Activated CD4-positive, alpha-beta T cell treated with anti-CD3 and anti-CD28 coated beads, Interleukin-2, amount 10 ng/mL, durations not matched to agents 7 days and 5 days (primary cell): ENCODE measurements at regions of chr16 and their contacts with region 1.

Region 1: GRCh38 chr16:67883872-67884261 is 818 bp upstream of the NRN1L start:
- DNase-seq: peak; percentile 69
- H3K4me3 Mint-ChIP-seq: no peak overlapping the region
- H3K27ac Mint-ChIP-seq: no peak overlapping the region
- H3K4me1 Mint-ChIP-seq: no peaks in the 10 kb centered on the region
- H3K27me3 Mint-ChIP-seq: no peaks in the 10 kb centered on the region

Region 2: DNA sequence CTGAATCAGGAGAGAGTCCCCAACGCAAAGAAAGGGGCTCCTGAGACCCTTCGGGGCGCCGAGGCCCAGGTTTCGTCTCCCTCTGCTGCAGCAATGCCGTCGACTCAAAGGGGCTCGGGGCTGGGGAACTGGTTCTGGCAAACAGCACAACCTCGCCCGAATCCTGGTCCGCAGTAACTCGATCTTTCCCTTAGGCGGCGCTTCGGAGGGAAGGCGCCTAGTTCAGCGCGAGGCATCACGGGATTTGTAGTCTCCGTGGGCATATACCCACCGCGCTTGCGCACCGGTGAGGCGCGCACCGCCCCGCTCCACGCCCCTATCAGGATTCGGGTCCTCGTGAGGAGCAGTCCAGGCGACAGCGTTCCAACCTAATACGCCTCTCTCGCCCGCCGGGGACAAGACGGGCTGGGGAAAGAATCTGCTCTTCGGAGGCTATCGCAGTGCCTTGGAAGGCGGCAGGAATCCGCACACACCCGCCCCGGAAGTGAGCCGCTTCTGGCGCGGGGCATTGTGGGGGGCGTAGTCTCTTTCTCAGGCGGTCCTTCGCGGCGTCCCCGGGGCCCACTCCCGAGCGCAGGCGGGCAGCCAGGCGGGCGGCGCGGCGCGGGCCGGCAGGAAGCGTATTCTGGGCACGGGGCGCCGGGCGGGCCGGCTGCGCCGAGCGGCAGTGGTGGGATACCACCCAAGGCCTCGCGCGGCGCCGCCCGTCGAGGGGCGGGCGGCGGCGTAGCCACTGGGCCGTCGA is 41.9 kb before region 1 on chr16 and contains the start of gene THAP11:
- CTCF ChIA-PET with region 1: interaction called, 16 read pairs
- POLR2A ChIA-PET with region 1: interaction called, 3 read pairs
- DNase-seq: peak; percentile 97
- H3K4me3 Mint-ChIP-seq: peak within 1 kb of the TSS; percentile 91
- H3K27ac Mint-ChIP-seq: peak within 1 kb of the TSS; percentile 98
- H3K4me1 Mint-ChIP-seq: peaks cover 40% of the 10 kb centered on the region
- H3K27me3 Mint-ChIP-seq: no peaks in the 10 kb centered on the region
- total RNA-seq, gene THAP11: 37.5 to 41.7 TPM

Region 3: GRCh38 chr16:67865316-67865715 is 18.6 kb before region 1 on chr16:
- CTCF ChIA-PET with region 1: interaction called, 10 read pairs
- POLR2A ChIA-PET with region 1: no interaction called
- DNase-seq: peak; percentile 36
- H3K4me3 Mint-ChIP-seq: no peak overlapping the region
- H3K27ac Mint-ChIP-seq: no peak overlapping the region
- H3K4me1 Mint-ChIP-seq: peaks cover 5% of the 10 kb centered on the region
- H3K27me3 Mint-ChIP-seq: no peaks in the 10 kb centered on the region

Region 4: GRCh38 chr16:67873538-67874370 is 10.1 kb before region 1 on chr16:
- CTCF ChIA-PET with region 1: interaction called, 10 read pairs
- POLR2A ChIA-PET with region 1: no interaction called
- DNase-seq: no peak
- H3K4me3 Mint-ChIP-seq: peak overlapping the region; percentile 93
- H3K27ac Mint-ChIP-seq: peak overlapping the region; percentile 94
- H3K4me1 Mint-ChIP-seq: peaks cover 29% of the 10 kb centered on the region
- H3K27me3 Mint-ChIP-seq: no peaks in the 10 kb centered on the region

Region 5: DNA sequence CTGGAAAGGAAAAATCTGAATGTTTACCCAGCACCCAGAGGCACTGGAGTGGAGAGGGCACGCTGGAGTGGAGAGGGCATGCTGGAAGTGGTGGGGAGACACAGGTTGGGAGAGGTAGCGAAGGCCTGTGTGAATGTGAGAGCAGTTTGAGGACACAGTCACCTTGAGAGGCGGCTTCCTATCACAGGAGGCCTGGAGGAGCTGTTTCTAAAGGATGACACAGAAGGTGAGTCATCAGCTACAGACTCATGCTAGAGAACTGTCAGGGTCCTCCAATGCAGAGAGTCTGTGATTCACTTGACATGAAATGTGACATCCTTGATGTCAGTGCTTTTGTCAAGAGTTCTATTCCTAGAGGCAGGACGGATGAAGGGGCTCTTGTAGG is 34.0 kb after region 1 on chr16:
- CTCF ChIA-PET with region 1: interaction called, 16 read pairs
- POLR2A ChIA-PET with region 1: no interaction called
- DNase-seq: no peak
- H3K4me3 Mint-ChIP-seq: no peak overlapping the region
- H3K27ac Mint-ChIP-seq: peak overlapping the region; percentile 1
- H3K4me1 Mint-ChIP-seq: peaks cover 24% of the 10 kb centered on the region
- H3K27me3 Mint-ChIP-seq: no peaks in the 10 kb centered on the region

Region 6: DNA sequence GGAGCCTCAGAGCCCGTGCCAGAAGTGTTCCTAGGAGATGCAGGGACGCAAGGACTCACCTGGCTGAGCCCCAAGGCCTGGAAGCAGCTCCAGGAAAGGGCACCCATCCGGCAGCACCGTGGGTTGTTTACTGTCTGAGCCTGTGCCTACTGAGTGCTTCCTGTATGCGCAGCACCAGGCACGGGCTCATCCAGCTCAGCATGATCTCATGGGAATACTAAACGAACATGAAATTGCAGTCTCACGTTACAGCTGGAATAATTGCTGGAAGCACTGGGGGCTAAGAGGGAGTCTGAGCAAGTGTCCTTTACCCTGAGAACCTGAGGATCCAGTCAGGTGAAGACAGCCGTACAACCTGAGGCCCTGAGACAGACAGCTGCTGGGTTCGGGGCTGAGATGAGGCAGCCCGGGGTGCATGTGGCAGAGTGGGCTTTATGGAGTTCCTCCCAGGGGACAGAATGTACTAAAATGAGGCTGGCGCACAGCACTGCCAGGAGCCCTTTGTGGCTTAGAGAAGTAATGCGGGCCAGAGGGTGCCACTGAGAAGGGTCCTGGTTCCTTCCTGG is 42.4 kb after region 1 on chr16:
- CTCF ChIA-PET with region 1: interaction called, 11 read pairs
- POLR2A ChIA-PET with region 1: interaction called, 3 read pairs
- DNase-seq: no peak
- H3K4me3 Mint-ChIP-seq: no peak overlapping the region
- H3K27ac Mint-ChIP-seq: no peak overlapping the region
- H3K4me1 Mint-ChIP-seq: peaks cover 6% of the 10 kb centered on the region
- H3K27me3 Mint-ChIP-seq: no peaks in the 10 kb centered on the region

Region 7: DNA sequence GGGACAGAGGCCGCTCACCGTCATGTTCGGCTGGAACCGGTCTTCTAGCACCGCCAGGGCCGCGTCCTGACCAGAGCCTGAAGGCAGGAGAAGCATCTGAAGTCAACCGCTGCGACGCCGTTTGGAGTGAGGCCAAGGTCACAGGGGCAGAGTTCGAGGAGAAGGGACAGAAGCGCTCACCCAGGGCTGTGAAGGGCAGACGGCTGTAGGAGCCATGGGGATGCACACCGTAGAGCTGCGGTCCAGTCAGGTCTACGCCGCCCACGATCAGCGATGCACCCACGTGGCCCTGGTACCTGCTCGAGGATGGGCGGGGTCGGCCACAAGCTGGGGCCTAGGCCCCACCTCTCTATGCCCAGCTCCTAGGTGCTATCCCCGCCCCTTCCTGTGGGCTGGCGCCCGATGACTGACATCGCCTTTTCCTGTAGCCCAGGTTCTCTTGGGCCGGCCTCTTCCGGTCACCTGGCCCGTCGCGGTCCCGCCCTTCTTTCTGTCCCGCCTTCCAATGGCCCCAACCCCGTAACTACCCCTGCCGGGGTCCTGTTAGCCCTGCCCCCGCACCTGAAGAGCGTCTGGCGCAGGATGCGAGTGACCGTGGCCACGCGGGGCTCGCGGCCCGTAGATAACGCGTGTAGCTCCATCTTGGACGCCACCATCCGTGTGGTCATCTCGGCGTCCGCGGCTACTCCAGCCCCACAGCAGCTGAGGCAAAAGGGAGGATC is 51.7 kb after region 1 on chr16:
- CTCF ChIA-PET with region 1: interaction called, 10 read pairs
- POLR2A ChIA-PET with region 1: interaction called, 3 read pairs
- DNase-seq: peak; percentile 97
- H3K4me3 Mint-ChIP-seq: peak overlapping the region; percentile 99
- H3K27ac Mint-ChIP-seq: peak overlapping the region; percentile 93
- H3K4me1 Mint-ChIP-seq: peaks cover 45% of the 10 kb centered on the region
- H3K27me3 Mint-ChIP-seq: no peaks in the 10 kb centered on the region